IMR-90 (cell line): ENCODE measurements at regions of chr17 and their contacts with region 1.

Region 1: DNA sequence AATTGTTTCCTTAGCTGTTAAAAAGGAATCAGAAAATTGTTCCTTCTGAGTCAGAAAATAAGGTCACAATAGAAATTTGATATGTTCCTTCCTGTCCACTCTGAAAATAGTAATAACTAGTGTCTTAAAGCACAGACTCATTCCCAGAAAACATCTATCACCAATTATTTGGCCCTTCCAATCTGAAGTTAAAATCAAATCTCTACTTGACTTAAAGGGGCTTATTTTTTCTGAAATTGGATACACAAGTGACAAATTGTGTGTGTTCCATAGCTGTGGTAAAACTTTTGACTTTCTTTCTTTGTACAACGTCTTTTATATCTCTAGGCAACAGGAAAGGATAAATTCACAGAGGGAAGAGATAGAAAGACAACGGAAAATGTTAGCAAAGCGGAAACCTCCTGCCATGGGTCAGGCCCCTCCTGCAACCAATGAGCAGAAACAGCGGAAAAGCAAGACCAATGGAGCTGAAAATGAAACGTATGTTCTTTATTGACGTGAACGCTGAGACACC is 54.5 kb upstream of the MRC2 start:
- DNase-seq: peak; percentile 53
- ATAC-seq: peak; percentile 17; the same call in 1 of the 2 replicates
- H3K4me3 ChIP-seq: no peak overlapping the region
- H3K27ac ChIP-seq: no peak overlapping the region
- H3K4me1 ChIP-seq: no peaks in the 10 kb centered on the region; the same call in 1 of the 2 replicates
- H3K27me3 ChIP-seq: no peaks in the 10 kb centered on the region
- CTCF ChIP-seq: no peak
- POLR2A ChIP-seq: no peak
- RAD21 ChIP-seq: no peak

Region 2: GRCh38 chr17:62601471-62601870 is 28.5 kb after region 1 on chr17:
- CTCF ChIA-PET with region 1: no interaction called
- POLR2A ChIA-PET with region 1: no interaction called
- dilution Hi-C with region 1: no loop called
- in situ Hi-C with region 1: no loop called
- intact Hi-C with region 1: no loop called
- DNase-seq: no peak
- ATAC-seq: 0 out of 2 replicates have a peak, but pooled peaks have one; percentile 29
- H3K4me3 ChIP-seq: no peak overlapping the region
- H3K27ac ChIP-seq: no peak overlapping the region
- H3K4me1 ChIP-seq: no peaks in the 10 kb centered on the region
- H3K27me3 ChIP-seq: no peaks in the 10 kb centered on the region
- CTCF ChIP-seq: no peak
- POLR2A ChIP-seq: no peak
- RAD21 ChIP-seq: no peak

Region 3: DNA sequence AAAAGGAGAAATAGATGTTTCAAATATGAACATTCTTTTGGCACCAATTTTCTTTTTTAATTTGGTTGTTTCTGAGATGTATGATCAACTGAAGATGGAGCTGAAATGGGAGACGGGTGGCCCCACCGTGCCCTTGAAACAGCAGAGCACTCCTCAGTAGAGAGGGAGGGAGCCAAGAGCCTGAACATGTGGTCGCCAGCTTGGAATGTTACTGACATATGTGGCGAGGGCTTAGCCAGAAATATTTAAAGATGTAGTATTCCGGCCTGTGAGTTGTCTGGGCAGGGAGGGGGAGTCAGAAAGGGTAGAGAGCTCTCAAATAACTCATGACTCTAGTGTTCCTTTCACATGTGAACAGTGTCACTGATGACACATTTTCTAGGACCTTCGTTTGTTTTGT is 41.2 kb after region 1 on chr17:
- CTCF ChIA-PET with region 1: no interaction called
- POLR2A ChIA-PET with region 1: no interaction called
- dilution Hi-C with region 1: no loop called
- in situ Hi-C with region 1: no loop called
- intact Hi-C with region 1: loop called (anchors 5 kb)
- DNase-seq: peak; percentile 92
- ATAC-seq: peak; percentile 86
- H3K4me3 ChIP-seq: no peak overlapping the region
- H3K27ac ChIP-seq: no peak overlapping the region
- H3K4me1 ChIP-seq: peaks cover 6% of the 10 kb centered on the region
- H3K27me3 ChIP-seq: no peaks in the 10 kb centered on the region
- CTCF ChIP-seq: no peak
- POLR2A ChIP-seq: no peak
- RAD21 ChIP-seq: no peak

Region 4: DNA sequence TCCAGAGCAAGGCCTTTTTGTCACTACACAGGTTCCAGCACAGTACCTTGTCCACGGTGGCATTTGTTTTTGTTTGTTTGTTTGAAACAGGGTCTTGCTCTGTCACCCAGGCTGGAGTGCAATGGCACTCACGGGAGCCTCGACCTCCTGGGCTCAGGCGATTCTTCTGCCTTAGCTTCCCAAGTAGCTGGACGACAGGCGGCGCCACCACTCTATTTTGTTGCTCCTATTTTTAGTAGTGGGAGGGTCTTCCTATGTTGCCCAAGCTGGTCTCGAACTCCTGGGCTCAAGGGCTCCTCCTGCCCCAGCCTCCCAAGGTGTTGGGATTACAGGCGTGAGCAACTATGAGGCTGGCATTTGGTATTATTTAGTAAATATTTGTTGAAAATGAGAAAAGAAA is 64.9 kb after region 1 on chr17:
- CTCF ChIA-PET with region 1: no interaction called
- POLR2A ChIA-PET with region 1: no interaction called
- dilution Hi-C with region 1: no loop called
- in situ Hi-C with region 1: no loop called
- intact Hi-C with region 1: no loop called
- DNase-seq: no peak
- ATAC-seq: no peak
- H3K4me3 ChIP-seq: no peak overlapping the region
- H3K27ac ChIP-seq: peak overlapping the region; percentile 16; the same call in 1 of the 2 replicates
- H3K4me1 ChIP-seq: peaks cover 9% of the 10 kb centered on the region
- H3K27me3 ChIP-seq: no peaks in the 10 kb centered on the region
- CTCF ChIP-seq: no peak
- POLR2A ChIP-seq: no peak
- RAD21 ChIP-seq: no peak

Region 5: GRCh38 chr17:62995377-62995885 is 422.5 kb after region 1 on chr17:
- CTCF ChIA-PET with region 1: no interaction called
- POLR2A ChIA-PET with region 1: no interaction called
- dilution Hi-C with region 1: no loop called
- in situ Hi-C with region 1: no loop called
- intact Hi-C with region 1: no loop called
- DNase-seq: peak; percentile 43
- ATAC-seq: peak; percentile 62
- H3K4me3 ChIP-seq: no peak overlapping the region
- H3K27ac ChIP-seq: no peak overlapping the region
- H3K4me1 ChIP-seq: no peaks in the 10 kb centered on the region
- H3K27me3 ChIP-seq: no peaks in the 10 kb centered on the region
- CTCF ChIP-seq: peak; percentile 52
- POLR2A ChIP-seq: no peak
- RAD21 ChIP-seq: peak; percentile 62